ENCODE measurements at regions of chr6 and their contacts with region 1.

Region 1: GRCh38 chr6:52399511-52400312 is 20.4 kb upstream of the EFHC1 start:
- DNase-seq: peak in 1 of 2 experiments; percentile 58
- ATAC-seq: peak; percentile 83 to 86
- H3K4me3 ChIP-seq: no peak overlapping the region
- H3K27ac ChIP-seq: no peak overlapping the region
- H3K4me1 ChIP-seq: no peaks in the 10 kb centered on the region
- CTCF ChIP-seq: peak; percentile 77
- EP300 ChIP-seq: no peak
- POLR2A ChIP-seq: no peak
- RAD21 ChIP-seq: peak; percentile 76 to 78

Region 2: GRCh38 chr6:52284460-52285176 is 115.1 kb before region 1 on chr6 and contains the start of gene MCM3:
- CTCF ChIA-PET with region 1: interaction called, 46 read pairs
- POLR2A ChIA-PET with region 1: interaction called, 3 read pairs
- DNase-seq: peak; percentile 84 to 98
- ATAC-seq: peak; percentile 99 to 100
- H3K4me3 ChIP-seq: peak within 1 kb of the TSS; percentile 72
- H3K27ac ChIP-seq: peak within 1 kb of the TSS; percentile 78 to 91
- H3K4me1 ChIP-seq: peaks cover 17% of the 10 kb centered on the region; the same call in 2 of the 3 replicates
- CTCF ChIP-seq: no peak
- EP300 ChIP-seq: no peak
- POLR2A ChIP-seq: peak; percentile 59
- RAD21 ChIP-seq: no peak
- polyA plus RNA-seq, gene MCM3: 105 and 111 TPM in 2 replicates

Region 3: GRCh38 chr6:52337633-52338290 is 62.0 kb before region 1 on chr6:
- CTCF ChIA-PET with region 1: no interaction called
- POLR2A ChIA-PET with region 1: no interaction called
- DNase-seq: no peak
- ATAC-seq: no peak
- H3K4me3 ChIP-seq: no peak overlapping the region
- H3K27ac ChIP-seq: no peak overlapping the region
- H3K4me1 ChIP-seq: peaks cover 6% of the 10 kb centered on the region; the same call in 2 of the 3 replicates
- CTCF ChIP-seq: no peak
- EP300 ChIP-seq: no peak
- POLR2A ChIP-seq: no peak
- RAD21 ChIP-seq: no peak

Measured in A549 (cell line).